WTC11 (cell line): ENCODE measurements at regions of chr17 and their contacts with region 1.

Region 1: GRCh38 chr17:35747540-35748017 is 5.5 kb downstream of the GAS2L2 start:
- DNase-seq: peak; percentile 87
- ATAC-seq: peak; percentile 80
- H3K4me3 Mint-ChIP-seq: no peak overlapping the region
- H3K27ac Mint-ChIP-seq: no peak overlapping the region
- H3K4me1 Mint-ChIP-seq: peaks cover 22% of the 10 kb centered on the region
- H3K27me3 Mint-ChIP-seq: peaks cover 48% of the 10 kb centered on the region
- CTCF ChIP-seq: peak; percentile 85

Region 2: GRCh38 chr17:35537601-35538141 is 209.9 kb before region 1 on chr17 and contains the start of gene SLFN12L:
- CTCF ChIA-PET with region 1: interaction called, 12 read pairs
- POLR2A ChIA-PET with region 1: no interaction called
- DNase-seq: no peak
- ATAC-seq: no peak
- H3K4me3 Mint-ChIP-seq: no peak within 1 kb of the TSS
- H3K27ac Mint-ChIP-seq: no peak within 1 kb of the TSS
- H3K4me1 Mint-ChIP-seq: no peaks in the 10 kb centered on the region
- H3K27me3 Mint-ChIP-seq: peaks cover 6% of the 10 kb centered on the region; the same call in 1 of the 2 replicates
- CTCF ChIP-seq: no peak
- total RNA-seq, gene SLFN12L: 0.07 to 0.16 TPM (median 0.13 TPM) in 3 replicates

Region 3: GRCh38 chr17:35578197-35578928 is 169.2 kb before region 1 on chr17 and contains the start of gene PEX12:
- CTCF ChIA-PET with region 1: interaction called, 11 read pairs
- POLR2A ChIA-PET with region 1: no interaction called
- DNase-seq: peak; percentile 83
- ATAC-seq: peak; percentile 96
- H3K4me3 Mint-ChIP-seq: peak within 1 kb of the TSS; percentile 90
- H3K27ac Mint-ChIP-seq: peak within 1 kb of the TSS; percentile 89
- H3K4me1 Mint-ChIP-seq: peaks cover 11% of the 10 kb centered on the region; the same call in 1 of the 2 replicates
- H3K27me3 Mint-ChIP-seq: peaks cover 4% of the 10 kb centered on the region
- CTCF ChIP-seq: no peak
- total RNA-seq, gene PEX12: 4.7 to 6.5 TPM (median 5.2 TPM) in 3 replicates

Region 4: GRCh38 chr17:35596530-35597233 is 150.9 kb before region 1 on chr17:
- CTCF ChIA-PET with region 1: interaction called, 14 read pairs
- POLR2A ChIA-PET with region 1: no interaction called
- DNase-seq: peak; percentile 81
- ATAC-seq: peak; percentile 99
- H3K4me3 Mint-ChIP-seq: peak overlapping the region; percentile 45
- H3K27ac Mint-ChIP-seq: peak overlapping the region; percentile 71; the same call in 1 of the 2 replicates
- H3K4me1 Mint-ChIP-seq: peaks cover 6% of the 10 kb centered on the region
- H3K27me3 Mint-ChIP-seq: no peaks in the 10 kb centered on the region
- CTCF ChIP-seq: peak; percentile 83

Region 5: GRCh38 chr17:35612924-35613521 is 134.6 kb before region 1 on chr17:
- CTCF ChIA-PET with region 1: interaction called, 89 read pairs
- POLR2A ChIA-PET with region 1: interaction called, 3 read pairs
- DNase-seq: peak; percentile 46
- ATAC-seq: 0 out of 2 replicates have a peak, but pooled peaks have one; percentile 36
- H3K4me3 Mint-ChIP-seq: no peak overlapping the region
- H3K27ac Mint-ChIP-seq: no peak overlapping the region
- H3K4me1 Mint-ChIP-seq: no peaks in the 10 kb centered on the region
- H3K27me3 Mint-ChIP-seq: no peaks in the 10 kb centered on the region
- CTCF ChIP-seq: no peak

Region 6: DNA sequence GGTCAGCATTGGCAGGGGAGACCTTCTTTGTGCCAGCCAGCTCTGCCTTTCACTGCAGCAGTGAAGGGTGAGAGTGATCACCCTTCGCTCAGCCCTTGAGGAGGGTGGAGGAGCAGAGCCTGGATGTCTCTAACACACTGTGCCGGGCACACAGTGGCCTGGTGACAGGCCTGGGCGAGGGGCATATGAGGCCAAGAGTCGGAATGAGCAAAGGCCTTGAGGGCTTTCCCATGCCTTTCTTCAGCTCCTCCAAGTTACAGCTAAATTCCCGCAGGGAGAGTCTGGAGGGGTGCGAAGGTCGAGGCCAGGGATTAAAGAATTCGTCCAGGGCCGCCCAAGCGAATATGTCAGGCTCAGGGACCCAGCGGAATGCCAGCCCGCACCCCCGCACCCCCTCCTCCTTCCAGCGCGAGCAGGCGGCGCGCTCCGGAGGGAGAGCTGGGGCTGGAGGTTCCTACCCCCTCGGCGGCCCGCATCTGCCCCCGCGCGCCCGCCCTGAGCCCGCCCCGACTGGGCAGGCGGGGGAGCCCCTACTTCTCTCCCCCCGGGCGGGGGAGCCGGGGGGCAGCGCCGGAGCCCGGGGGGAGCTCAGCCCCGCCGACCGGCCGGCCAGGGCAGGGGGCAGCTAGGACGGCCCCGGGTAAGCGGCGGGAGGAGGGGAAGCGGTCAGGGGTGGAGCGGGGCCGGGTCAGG is 16.2 kb before region 1 on chr17 and contains the start of gene RASL10B:
- CTCF ChIA-PET with region 1: interaction called, 85 read pairs
- POLR2A ChIA-PET with region 1: interaction called, 3 read pairs
- DNase-seq: peak; percentile 80
- ATAC-seq: peak; percentile 75
- H3K4me3 Mint-ChIP-seq: peak within 1 kb of the TSS; percentile 85
- H3K27ac Mint-ChIP-seq: no peak within 1 kb of the TSS
- H3K4me1 Mint-ChIP-seq: peaks cover 39% of the 10 kb centered on the region
- H3K27me3 Mint-ChIP-seq: peaks cover 16% of the 10 kb centered on the region
- CTCF ChIP-seq: no peak
- total RNA-seq, gene RASL10B: 17.4 to 25.4 TPM (median 25.3 TPM) in 3 replicates

Region 7: DNA sequence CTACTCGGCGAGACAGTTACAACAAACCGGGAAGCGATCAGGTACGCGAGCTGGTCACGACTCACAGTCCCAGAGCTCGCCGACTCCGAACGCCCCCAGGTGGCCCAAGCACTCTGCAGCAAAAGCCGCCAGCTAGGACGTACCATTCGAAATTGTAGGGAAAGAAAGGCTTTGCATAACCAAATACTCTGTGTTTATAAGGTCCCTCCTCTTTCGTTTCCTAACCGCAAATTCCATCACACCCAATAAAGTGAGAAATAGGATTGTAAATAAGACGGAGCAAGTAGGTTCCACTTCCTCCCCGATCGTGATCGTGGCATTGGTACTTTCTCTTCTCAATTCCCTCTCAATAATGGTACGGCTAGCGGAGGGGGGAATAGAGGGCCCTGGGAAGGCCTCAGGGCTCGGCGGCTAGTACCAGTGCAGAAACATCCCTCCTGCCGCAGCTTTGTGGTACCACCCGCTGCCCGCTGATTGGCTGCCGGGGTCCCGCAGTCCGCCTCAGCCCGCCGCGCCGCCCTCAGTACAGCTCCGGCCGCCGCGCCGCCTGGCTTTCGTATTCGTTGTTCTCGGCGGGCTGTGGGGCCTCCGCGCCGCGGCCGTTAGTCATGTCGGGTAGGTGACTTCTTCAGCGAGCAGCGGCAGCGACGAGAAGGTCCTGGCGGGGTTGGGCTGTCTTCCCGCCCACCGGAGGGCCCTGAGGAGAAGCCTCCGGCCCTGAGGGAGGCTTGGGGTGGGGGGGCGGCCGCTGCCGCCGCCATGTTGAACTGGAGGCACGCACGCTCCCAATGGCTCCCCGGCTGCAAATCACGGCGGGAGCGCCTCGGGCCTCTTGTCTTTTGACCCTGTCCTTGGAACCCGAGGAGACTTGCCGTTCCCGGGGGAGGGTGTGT is 61.6 kb after region 1 on chr17 and contains the start of gene TAF15:
- CTCF ChIA-PET with region 1: interaction called, 24 read pairs
- POLR2A ChIA-PET with region 1: interaction called, 4 read pairs
- DNase-seq: peak; percentile 97
- ATAC-seq: peak; percentile 90
- H3K4me3 Mint-ChIP-seq: peak within 1 kb of the TSS; percentile 99
- H3K27ac Mint-ChIP-seq: peak within 1 kb of the TSS; percentile 99
- H3K4me1 Mint-ChIP-seq: peaks cover 36% of the 10 kb centered on the region
- H3K27me3 Mint-ChIP-seq: no peaks in the 10 kb centered on the region
- CTCF ChIP-seq: no peak
- total RNA-seq, gene TAF15: 273 to 322 TPM (median 316 TPM) in 3 replicates